ENCODE measurements at regions of chr3 and their contacts with region 1.

Region 1: DNA sequence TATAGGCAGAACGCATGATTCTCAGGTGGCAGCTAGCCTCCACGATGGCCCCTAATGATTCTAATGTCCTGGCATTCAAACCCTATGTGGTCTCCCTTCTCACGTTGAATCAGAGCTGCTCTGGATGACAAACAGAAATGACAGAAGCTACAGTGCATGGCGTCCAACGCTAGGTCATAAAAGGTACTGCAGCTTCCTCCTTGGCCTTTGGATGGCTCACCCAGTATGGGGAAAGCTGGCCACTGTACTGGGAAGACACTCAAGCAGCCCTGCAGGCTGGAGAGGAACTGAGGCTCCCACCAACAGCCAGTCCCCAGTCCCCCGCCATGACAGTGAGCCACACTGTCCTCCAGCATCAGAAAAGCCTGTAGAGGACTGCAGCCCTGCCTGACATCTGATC is 286.3 kb downstream of the FAM43A start:
- DNase-seq: no peak

Region 2: GRCh38 chr3:194945508-194945907 is 26.5 kb before region 1 on chr3:
- intact Hi-C with region 1: loop called in 1 of 2 experiments (anchors 2 kb)
- DNase-seq: no peak

Measured in posterior vena cava (tissue), 2 donors.